ENCODE measurements at regions of chr11 and their contacts with region 1.

Region 1: GRCh38 chr11:63635762-63636465 is 21.7 kb upstream of the PLAAT3 start:
- DNase-seq: peak; percentile 48
- H3K4me3 Mint-ChIP-seq: no peak overlapping the region
- H3K27ac Mint-ChIP-seq: no peak overlapping the region
- H3K4me1 Mint-ChIP-seq: peaks cover 12% of the 10 kb centered on the region
- H3K27me3 Mint-ChIP-seq: no peaks in the 10 kb centered on the region

Region 2: DNA sequence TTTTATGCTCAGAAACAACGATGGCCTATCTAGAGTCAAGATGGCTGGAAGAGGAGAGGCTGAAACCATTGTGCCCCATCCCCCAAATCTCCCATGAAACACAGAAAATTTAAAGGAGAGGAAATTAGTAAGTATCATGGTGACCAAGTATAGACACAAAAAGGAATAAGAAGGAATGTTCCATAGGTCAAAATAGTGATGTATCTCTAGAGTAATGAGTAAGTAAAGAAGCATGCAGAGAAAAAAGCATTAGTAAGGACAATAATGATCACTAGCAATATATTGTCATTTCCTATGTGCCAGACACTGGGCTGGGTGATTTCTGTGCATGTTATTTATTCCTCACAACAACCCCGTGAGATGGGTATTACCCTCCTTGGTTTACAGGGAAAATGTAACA is 489.3 kb before region 1 on chr11:
- intact Hi-C with region 1: no loop called
- DNase-seq: no peak
- H3K4me3 Mint-ChIP-seq: no peak overlapping the region
- H3K27ac Mint-ChIP-seq: no peak overlapping the region
- H3K4me1 Mint-ChIP-seq: no peaks in the 10 kb centered on the region
- H3K27me3 Mint-ChIP-seq: no peaks in the 10 kb centered on the region

Region 3: DNA sequence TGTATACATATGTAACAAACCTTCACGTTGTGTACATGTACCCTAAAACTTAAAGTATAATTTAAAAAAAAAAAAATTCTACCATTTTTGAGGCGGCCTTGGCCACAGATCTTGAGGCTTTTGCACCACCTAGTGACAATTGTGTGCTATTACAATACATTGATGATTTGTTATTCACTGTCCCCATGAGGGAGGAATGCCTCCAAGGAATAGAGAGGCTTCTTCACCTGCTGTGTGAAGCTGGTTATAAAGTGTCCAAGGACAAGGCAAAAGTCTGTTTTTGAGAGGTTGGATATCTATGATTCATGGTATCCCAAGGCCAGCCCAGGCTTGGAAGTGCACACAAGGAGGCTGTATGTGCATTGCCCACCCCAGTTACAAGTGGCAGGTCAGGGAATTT is 423.2 kb before region 1 on chr11:
- intact Hi-C with region 1: loop called (anchors 10 kb)
- DNase-seq: peak; percentile 2
- H3K4me3 Mint-ChIP-seq: no peak overlapping the region
- H3K27ac Mint-ChIP-seq: no peak overlapping the region
- H3K4me1 Mint-ChIP-seq: no peaks in the 10 kb centered on the region
- H3K27me3 Mint-ChIP-seq: peaks cover under 1% of the 10 kb centered on the region

Region 4: DNA sequence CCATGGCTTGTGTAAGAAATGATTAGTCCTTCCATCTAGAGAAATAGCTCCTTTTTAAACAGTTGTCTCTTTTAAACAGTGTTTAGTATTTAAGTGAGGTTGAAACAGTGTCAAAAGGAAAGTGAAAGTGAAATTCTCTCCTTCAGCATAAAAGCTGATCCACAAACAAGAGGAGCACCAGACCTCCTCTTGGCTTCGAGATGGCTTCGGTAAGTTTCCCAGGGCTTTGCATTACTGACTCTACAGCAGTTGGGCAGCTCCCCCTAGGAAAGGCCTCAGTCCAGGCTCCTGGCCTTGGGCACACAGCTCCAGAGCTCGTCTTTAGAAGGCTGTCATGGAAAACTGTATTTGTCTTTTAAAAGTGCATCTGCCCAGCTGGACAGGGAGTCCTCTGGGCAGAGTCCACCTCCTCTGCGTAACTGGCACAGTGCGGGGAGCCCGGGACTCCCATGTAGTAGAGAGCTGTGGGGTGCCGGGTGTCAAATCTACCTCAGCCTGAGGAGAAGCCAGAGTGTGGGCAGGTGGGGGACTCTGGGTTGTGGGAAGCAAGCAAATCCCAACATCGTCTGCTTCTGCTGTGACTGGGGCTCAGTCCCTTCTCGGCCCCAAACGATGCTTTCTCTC is 99.1 kb before region 1 on chr11 and contains the start of gene PLAAT4:
- intact Hi-C with region 1: loop called (anchors 5 kb)
- DNase-seq: peak; percentile 41
- H3K4me3 Mint-ChIP-seq: peak within 1 kb of the TSS; percentile 86
- H3K27ac Mint-ChIP-seq: peak within 1 kb of the TSS; percentile 91
- H3K4me1 Mint-ChIP-seq: peaks cover 69% of the 10 kb centered on the region
- H3K27me3 Mint-ChIP-seq: no peaks in the 10 kb centered on the region
- total RNA-seq, gene PLAAT4: 11.8 and 12.2 TPM in 2 replicates

Region 5: GRCh38 chr11:63592975-63593395 is 42.9 kb before region 1 on chr11:
- intact Hi-C with region 1: loop called (anchors 2 kb)
- DNase-seq: no peak
- H3K4me3 Mint-ChIP-seq: no peak overlapping the region
- H3K27ac Mint-ChIP-seq: no peak overlapping the region
- H3K4me1 Mint-ChIP-seq: peaks cover 5% of the 10 kb centered on the region
- H3K27me3 Mint-ChIP-seq: no peaks in the 10 kb centered on the region

Region 6: DNA sequence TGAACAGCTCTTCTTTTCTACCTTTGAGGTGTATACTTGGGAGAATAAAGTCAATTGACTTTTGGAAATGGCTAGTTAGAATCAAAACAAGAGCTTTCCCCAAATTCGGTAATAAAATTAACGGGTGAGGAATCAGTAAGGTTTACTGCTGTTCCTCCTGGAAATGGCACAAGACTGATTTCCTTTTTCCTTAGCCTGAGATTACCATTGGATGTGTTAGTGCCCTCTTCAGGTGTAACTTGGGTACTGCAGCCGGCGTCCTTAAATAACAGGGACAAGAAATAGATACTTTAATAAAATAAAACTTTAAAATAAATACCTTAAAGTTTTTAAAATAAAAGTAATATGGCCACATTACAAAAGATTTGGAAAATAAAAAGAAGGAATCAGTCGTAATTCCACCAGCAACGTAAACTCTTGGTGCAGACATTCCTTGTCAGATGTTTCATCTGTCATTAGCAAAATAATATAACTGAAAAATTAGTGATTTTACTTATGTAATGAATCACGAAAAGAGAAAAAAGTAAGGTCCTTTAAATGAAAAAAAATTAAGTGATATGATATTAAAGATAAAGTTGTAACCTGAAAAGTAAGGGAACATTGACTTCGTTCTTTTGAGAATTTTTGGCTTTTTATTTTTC is 102.9 kb after region 1 on chr11:
- intact Hi-C with region 1: loop called (anchors 2 kb)
- DNase-seq: peak; percentile 26
- H3K4me3 Mint-ChIP-seq: no peak overlapping the region
- H3K27ac Mint-ChIP-seq: no peak overlapping the region
- H3K4me1 Mint-ChIP-seq: peaks cover 5% of the 10 kb centered on the region
- H3K27me3 Mint-ChIP-seq: no peaks in the 10 kb centered on the region

Region 7: DNA sequence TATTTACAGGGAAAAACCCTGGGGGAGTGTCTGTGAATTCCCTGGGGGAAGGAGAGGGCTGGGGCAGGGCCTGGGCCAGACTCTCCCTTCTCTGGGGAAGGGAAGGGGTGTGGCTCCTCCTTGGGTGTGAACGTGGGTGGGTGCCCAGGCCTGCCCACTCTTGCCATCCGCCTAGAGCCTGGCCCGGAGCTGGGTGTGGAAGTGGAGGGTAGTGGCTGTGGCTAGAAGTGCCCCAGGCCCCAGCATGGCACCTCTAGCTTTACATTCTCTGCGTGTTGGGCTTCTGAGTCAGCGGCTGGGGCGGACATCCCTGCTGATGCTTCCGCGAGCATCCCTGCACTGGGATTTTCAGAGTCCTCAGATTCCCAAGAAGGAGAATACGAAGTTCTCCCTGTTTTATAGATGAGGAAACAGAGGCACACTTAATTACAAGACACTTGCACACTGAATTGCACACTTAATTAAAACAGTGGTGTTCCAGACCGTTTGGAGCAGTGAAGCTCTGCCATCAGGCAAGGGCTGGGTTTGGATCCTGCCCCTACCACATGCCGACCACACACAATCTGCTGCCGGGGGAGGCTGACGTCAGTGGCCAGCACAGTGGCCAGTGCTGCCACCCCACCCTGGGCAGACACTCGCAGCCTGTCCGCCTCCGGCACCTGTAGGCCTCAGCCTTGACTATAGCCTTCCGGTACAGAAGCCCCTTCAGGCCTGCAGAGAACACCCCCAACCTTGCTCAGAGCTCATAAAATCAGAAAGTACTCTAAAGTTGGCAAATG is 640.9 kb after region 1 on chr11:
- intact Hi-C with region 1: no loop called
- DNase-seq: no peak
- H3K4me3 Mint-ChIP-seq: no peak overlapping the region
- H3K27ac Mint-ChIP-seq: no peak overlapping the region
- H3K4me1 Mint-ChIP-seq: peaks cover 17% of the 10 kb centered on the region
- H3K27me3 Mint-ChIP-seq: no peaks in the 10 kb centered on the region